Common myeloid progenitor, CD34-positive (primary cell): ENCODE measurements at regions of chr14 and their contacts with region 1.

Region 1: DNA sequence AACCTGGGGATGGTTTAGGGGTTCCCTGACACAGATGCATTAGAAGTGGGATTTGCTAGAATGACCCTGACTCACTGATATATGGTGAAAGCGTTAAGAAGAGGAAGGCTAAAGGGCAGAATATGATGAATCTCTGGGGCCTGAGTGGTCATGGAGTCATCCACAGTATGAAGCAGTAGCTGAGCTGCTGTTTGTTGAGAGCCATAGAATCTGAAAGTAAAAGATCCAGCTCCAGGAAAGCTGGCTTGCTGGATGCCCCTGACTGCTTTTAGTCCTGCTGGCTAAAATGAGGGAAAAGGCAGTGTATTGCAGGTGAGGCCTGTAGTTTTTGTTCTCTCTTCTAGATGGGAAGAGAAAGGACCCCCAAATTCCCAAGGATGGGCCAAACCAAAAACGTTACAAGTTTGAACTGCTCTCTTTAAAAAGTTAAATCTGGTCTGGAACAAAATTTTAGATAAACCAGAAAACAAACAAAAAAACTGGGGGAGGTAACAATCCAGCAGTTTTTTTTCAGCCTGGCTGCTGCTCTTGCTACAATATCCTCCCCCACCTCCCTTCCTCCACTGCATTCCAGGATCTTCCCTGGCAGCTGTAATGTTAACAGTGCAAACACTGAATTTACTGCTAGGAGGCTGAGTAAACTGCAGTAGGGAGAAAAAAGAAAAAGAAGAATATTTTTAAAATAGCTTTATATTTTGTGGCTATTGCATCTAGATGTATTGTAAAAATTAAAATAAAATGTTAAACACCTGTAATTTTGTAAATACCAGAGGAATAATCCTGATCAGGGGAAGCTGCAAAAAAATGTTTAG is 16.5 kb downstream of the SEL1L start:
- DNase-seq: no peak
- H3K4me3 ChIP-seq: no peak overlapping the region
- H3K27ac ChIP-seq: no peak overlapping the region
- H3K4me1 ChIP-seq: peaks cover 14 to 30% (median 26%) of the 10 kb centered on the region in 4 experiments
- H3K27me3 ChIP-seq: no peaks in the 10 kb centered on the region

Region 2: DNA sequence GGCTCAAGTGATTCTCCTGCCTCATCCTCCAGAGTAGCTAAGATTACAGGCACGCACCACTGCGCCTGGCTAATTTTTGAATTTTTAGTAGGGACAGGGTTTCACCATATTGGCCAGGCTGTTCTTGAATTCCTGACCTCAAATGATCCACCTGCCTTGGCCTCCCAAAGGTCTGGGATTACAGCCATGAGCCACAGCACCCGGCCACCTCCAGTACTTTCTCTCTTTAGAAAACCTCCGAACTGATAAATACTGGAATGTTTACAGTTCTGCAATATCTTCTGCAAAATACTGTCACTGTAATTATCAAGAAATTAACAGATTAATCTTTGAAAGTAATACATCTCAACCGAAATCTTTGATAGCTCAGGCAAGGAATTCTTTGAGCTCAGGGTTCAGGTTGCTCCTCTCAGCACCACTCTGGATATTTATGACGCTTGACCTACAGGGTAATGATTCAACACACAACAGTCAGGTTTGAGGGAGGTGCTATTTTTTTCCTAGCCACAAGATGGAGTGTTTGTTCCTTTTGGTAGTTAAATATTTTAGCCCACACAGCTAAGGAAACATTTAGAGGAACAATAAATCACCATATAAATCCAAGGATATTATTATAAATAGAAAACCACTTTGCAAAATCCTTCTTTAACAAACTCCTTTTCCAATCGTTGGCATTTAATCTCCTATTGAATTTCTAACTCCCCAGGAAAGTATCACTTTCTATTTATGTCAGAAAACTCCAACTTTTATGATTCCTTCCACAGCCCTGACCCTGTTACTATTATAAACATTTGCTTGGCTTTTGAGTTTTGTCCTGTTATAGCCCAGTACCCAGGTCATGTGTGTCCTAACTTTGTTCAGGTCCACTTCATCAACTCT is 247.9 kb before region 1 on chr14:
- CTCF ChIA-PET with region 1: no interaction called
- POLR2A ChIA-PET with region 1: no interaction called
- DNase-seq: peak; percentile 66 to 76 (median 69)
- H3K4me3 ChIP-seq: no peak overlapping the region
- H3K27ac ChIP-seq: no peak overlapping the region
- H3K4me1 ChIP-seq: peaks cover 7 to 31% (median 22%) of the 10 kb centered on the region in 4 experiments
- H3K27me3 ChIP-seq: no peaks in the 10 kb centered on the region

Region 3: DNA sequence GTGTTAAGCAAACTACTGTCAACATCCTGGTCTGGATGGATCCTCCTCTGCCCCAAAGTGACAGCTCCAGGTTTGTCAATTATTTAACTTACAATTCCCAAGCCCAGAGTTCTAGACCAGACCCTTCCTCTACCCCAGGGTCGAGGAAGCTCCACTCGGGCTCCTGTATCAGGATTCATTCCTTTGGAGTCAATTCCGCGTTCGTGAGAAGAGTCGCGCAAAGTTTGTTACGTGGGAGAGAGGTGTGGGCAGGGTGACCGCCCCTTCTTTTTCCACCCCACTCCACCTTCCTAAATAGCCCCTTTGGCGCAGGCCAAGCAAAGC is 16.0 kb after region 1 on chr14:
- CTCF ChIA-PET with region 1: interaction called, 12 read pairs
- POLR2A ChIA-PET with region 1: interaction called, 8 read pairs
- DNase-seq: no peak
- H3K4me3 ChIP-seq: peak overlapping the region; percentile 82 to 99 (median 96)
- H3K27ac ChIP-seq: peak overlapping the region; percentile 88 to 94
- H3K4me1 ChIP-seq: peaks cover 3 to 23% (median 14%) of the 10 kb centered on the region in 4 experiments
- H3K27me3 ChIP-seq: no peaks in the 10 kb centered on the region